ENCODE measurements at regions of chr4 and their contacts with region 1.

Region 1: GRCh38 chr4:147019061-147019460 is 73.4 kb upstream of the TTC29 start:
- DNase-seq: peak; percentile 29
- CTCF ChIP-seq: peak; percentile 64

Region 2: DNA sequence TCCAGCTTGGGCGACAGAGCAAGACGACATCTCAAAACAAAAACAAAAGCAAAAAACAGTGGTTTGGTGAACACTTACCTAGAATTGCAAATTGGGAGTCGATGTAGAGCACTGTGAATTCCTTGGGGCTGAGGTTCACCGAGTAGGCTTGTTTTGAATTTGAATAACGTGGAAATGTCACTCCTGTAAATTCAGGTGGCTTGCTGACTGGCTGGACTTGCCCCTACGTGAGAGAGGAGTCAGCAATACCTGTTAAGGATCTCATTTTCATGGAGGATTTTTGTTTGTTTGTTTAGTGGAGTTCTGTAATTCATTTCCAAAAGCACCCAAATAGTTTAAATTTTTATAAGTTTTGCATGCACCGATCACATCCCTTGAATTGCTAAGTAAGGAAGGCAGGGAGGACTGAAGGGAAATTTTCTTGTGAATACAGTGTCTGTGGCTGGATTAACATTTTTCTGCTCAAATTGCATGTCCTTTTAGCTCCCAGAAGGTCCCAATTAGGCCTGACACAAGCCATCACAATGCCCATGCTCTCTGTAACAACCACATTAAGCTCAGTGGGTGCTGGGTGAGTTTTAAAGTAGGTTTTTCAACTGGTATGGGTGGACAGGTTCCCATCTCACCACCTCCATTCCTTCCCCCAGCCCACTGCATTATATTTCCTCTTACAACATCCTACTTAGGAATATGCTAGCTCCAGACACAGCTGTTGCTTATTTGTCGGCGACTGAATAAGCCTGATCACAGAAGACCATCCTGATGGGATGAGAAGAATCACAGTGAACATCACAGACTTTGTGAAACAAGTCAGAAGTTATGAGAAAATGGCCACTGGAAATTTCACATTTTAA is 14.9 kb before region 1 on chr4:
- CTCF ChIA-PET with region 1: interaction called, 12 read pairs
- POLR2A ChIA-PET with region 1: no interaction called
- DNase-seq: no peak
- CTCF ChIP-seq: no peak

Region 3: GRCh38 chr4:147088146-147088545 is 69.1 kb after region 1 on chr4:
- CTCF ChIA-PET with region 1: interaction called, 23 read pairs
- POLR2A ChIA-PET with region 1: no interaction called
- DNase-seq: no peak
- CTCF ChIP-seq: no peak

Region 4: DNA sequence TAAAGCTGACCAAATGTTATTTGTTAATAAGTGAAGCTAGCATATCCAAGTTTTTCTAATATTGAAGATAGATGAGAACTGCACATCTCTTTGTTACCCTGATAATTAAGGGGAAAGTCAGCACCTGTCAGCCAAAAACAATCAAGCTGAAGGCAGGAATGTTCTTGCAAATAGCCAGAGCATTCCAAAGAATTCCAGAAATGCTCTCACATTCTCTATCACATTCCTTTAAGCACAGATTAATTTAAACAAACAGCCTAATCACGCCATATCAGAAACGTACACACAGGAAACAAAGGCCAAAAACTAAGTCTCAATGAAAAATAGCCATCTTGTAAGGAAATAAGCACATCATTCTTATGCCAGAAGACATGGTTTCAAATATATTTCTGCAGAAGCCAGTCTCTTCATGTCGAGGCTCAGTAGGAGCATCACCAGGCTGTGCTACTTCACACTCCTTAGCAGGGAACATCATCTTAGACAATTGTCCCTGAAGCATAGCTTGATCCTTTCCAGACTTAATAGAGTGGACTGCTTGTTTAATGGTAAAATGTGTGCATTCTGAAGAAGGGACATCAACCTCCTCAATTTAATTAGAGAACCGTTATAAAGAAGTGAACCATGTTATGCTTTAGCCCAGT is 179.5 kb after region 1 on chr4:
- CTCF ChIA-PET with region 1: no interaction called
- POLR2A ChIA-PET with region 1: no interaction called
- DNase-seq: no peak
- CTCF ChIP-seq: no peak

Measured in GM10248 (cell line).